ENCODE measurements at regions of chr12 and their contacts with region 1.

Region 1: GRCh38 chr12:108514973-108515814 is at the start of gene FICD:
- DNase-seq: peak; percentile 97 to 100 (median 99)
- ATAC-seq: peak; percentile 95
- H3K4me3 ChIP-seq: peak within 1 kb of the TSS; percentile 90 to 99
- H3K4me3 Mint-ChIP-seq: peak within 1 kb of the TSS; percentile 92
- H3K27ac ChIP-seq: peak within 1 kb of the TSS; percentile 74 to 86
- H3K27ac Mint-ChIP-seq: peak within 1 kb of the TSS; percentile 94
- H3K4me1 ChIP-seq: peaks cover 20% of the 10 kb centered on the region
- H3K4me1 Mint-ChIP-seq: peaks cover 30% of the 10 kb centered on the region
- H3K27me3 ChIP-seq: no peaks in the 10 kb centered on the region
- H3K27me3 Mint-ChIP-seq: no peaks in the 10 kb centered on the region
- CTCF ChIP-seq: no peak
- total RNA-seq, gene FICD: 4.2 to 4.3 TPM

Region 2: GRCh38 chr12:107372229-107372658 is 1143.0 kb before region 1 on chr12:
- CTCF ChIA-PET with region 1: no interaction called
- POLR2A ChIA-PET with region 1: no interaction called
- intact Hi-C with region 1: loop called in 1 of 2 experiments (anchors 10 kb)
- DNase-seq: peak in 8 of 9 experiments; percentile 7 to 84 (median 41)
- ATAC-seq: peak; percentile 66
- H3K4me3 ChIP-seq: peak overlapping the region in 1 of 2 experiments; percentile 7
- H3K4me3 Mint-ChIP-seq: peak overlapping the region; percentile 72
- H3K27ac ChIP-seq: peak overlapping the region; percentile 43 to 62
- H3K27ac Mint-ChIP-seq: peak overlapping the region; percentile 89
- H3K4me1 ChIP-seq: peaks cover 74% of the 10 kb centered on the region
- H3K4me1 Mint-ChIP-seq: peaks cover 83% of the 10 kb centered on the region
- H3K27me3 ChIP-seq: no peaks in the 10 kb centered on the region
- H3K27me3 Mint-ChIP-seq: no peaks in the 10 kb centered on the region
- CTCF ChIP-seq: no peak

Region 3: GRCh38 chr12:107760809-107761501 is 754.2 kb before region 1 on chr12 and contains the start of gene PRDM4:
- CTCF ChIA-PET with region 1: interaction called, 5 read pairs
- POLR2A ChIA-PET with region 1: no interaction called
- intact Hi-C with region 1: loop called in 1 of 2 experiments (anchors 1 kb)
- DNase-seq: peak; percentile 76 to 97 (median 88)
- ATAC-seq: peak; percentile 95
- H3K4me3 ChIP-seq: peak within 1 kb of the TSS; percentile 76 to 82
- H3K4me3 Mint-ChIP-seq: peak within 1 kb of the TSS; percentile 89
- H3K27ac ChIP-seq: peak within 1 kb of the TSS; percentile 80 to 83
- H3K27ac Mint-ChIP-seq: peak within 1 kb of the TSS; percentile 90
- H3K4me1 ChIP-seq: peaks cover 31% of the 10 kb centered on the region
- H3K4me1 Mint-ChIP-seq: peaks cover 44% of the 10 kb centered on the region
- H3K27me3 ChIP-seq: no peaks in the 10 kb centered on the region
- H3K27me3 Mint-ChIP-seq: no peaks in the 10 kb centered on the region
- CTCF ChIP-seq: no peak
- total RNA-seq, gene PRDM4: 44.9 to 46.0 TPM

Region 4: DNA sequence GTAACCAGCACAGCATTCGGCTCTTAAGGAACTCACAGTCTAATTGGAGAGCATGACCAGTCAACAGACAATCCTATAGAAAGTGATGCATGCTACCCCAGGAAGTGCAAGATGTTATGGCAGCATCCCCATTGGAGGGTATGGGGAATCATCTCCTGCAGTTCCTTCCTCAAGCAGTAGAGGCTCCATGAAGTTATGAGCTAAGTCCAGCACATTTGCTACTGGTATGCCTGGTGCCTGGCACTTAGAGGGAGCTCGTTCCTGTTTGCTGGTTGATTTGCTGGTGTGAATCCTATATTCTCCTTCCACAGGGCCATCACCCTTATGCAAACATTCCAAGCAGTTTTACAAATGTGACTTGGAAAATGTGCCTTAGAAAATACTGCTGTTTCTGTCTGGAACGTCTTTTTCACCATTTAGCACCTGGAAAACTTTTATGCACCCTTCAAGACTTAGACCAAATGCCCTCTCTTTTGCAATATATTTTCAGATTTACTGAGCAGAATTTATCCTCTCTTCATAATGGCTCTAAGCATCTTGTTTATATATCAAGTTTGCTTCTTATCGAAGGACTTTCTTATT is 522.2 kb before region 1 on chr12:
- CTCF ChIA-PET with region 1: interaction called, 12 read pairs
- POLR2A ChIA-PET with region 1: no interaction called
- intact Hi-C with region 1: loop called in 1 of 2 experiments (anchors 1 kb)
- DNase-seq: peak in 2 of 9 experiments; percentile 8 to 12
- ATAC-seq: no peak
- H3K4me3 ChIP-seq: no peak overlapping the region
- H3K4me3 Mint-ChIP-seq: no peak overlapping the region
- H3K27ac ChIP-seq: no peak overlapping the region
- H3K27ac Mint-ChIP-seq: no peak overlapping the region
- H3K4me1 ChIP-seq: no peaks in the 10 kb centered on the region
- H3K4me1 Mint-ChIP-seq: no peaks in the 10 kb centered on the region
- H3K27me3 ChIP-seq: no peaks in the 10 kb centered on the region
- H3K27me3 Mint-ChIP-seq: peaks cover 17% of the 10 kb centered on the region
- CTCF ChIP-seq: no peak

Region 5: DNA sequence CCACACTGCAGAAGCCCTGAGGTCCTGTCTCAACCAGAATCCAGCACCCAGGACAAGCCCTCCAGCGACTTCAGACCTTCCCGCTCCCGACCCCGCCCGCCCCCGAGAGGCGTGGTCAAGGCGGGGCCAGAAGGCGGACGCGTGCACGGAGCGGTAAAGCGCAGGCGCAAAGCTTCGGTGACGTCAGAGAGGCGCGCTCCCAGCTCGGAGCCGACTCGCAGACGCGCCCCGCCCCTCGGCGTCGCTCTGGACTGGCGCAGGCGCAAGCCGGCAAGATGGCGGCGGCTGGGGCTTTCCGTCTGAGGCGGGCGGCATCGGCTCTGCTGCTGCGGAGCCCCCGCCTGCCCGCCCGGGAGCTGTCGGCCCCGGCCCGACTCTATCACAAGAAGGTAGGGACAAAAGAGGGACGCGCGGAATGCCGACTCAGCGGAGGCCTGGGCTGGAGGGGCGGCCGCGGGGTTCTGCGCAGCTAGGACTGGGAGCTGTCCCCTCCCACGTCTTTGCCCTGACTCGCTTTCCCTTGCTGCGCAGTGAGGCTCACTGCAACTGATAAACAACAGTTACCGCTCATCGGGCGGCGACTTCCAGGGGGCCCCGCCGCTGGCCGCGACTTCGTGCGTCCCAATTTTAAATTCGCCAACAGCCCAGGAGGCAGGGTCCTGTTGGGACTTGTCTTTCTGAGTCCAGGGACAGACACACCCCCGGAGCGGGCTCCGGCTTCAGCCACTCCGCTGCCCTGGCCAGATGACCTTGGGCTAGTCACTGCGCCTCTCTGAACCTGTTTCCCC is 47.3 kb after region 1 on chr12 and contains the start of gene ISCU:
- CTCF ChIA-PET with region 1: interaction called, 5 read pairs
- POLR2A ChIA-PET with region 1: no interaction called
- intact Hi-C with region 1: loop called (anchors 1 kb)
- DNase-seq: peak; percentile 97 to 100 (median 99)
- ATAC-seq: peak; percentile 70
- H3K4me3 ChIP-seq: peak within 1 kb of the TSS; percentile 90 to 96
- H3K4me3 Mint-ChIP-seq: peak within 1 kb of the TSS; percentile 100
- H3K27ac ChIP-seq: peak within 1 kb of the TSS; percentile 92 to 94
- H3K27ac Mint-ChIP-seq: peak within 1 kb of the TSS; percentile 100
- H3K4me1 ChIP-seq: peaks cover 44% of the 10 kb centered on the region
- H3K4me1 Mint-ChIP-seq: peaks cover 55% of the 10 kb centered on the region
- H3K27me3 ChIP-seq: no peaks in the 10 kb centered on the region
- H3K27me3 Mint-ChIP-seq: no peaks in the 10 kb centered on the region
- CTCF ChIP-seq: no peak
- total RNA-seq, gene ISCU: 254 to 260 TPM

Region 6: DNA sequence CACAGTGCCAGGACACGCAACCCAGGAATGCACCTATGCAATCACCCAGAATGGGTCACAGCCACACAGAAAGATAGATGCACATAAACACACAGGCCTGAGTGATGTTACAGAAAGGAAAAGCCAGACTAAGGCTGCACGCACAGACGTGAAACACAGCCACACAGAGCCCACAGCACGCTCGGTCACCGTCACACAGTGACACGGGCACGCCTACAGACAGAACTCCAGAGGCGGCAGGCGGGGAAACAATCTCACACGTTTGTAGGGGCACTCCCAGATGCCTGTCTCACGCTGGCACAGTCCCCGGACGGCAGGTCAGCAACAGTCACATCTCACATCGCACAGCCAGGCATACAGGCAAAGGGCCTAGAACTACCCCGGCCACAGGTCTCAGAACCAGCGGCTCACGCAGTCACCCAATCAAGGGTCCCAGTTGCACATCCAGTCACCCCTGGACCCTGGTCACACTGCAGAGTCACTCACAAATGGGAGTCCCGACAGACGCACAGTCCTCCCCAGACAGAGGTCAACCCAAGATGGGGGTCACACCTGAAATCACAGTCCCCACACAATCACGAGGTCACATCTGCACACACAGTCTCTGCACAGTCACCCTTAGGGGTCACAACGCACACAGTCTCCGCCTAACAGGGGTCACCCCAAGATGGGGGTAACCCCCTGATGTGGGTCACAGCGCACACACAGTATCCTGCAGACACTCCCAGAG is 341.4 kb after region 1 on chr12:
- CTCF ChIA-PET with region 1: interaction called, 3 read pairs
- POLR2A ChIA-PET with region 1: no interaction called
- intact Hi-C with region 1: loop called (anchors 1 kb)
- DNase-seq: peak; percentile 27 to 92 (median 64)
- ATAC-seq: peak; percentile 70
- H3K4me3 ChIP-seq: peak overlapping the region; percentile 58 to 71
- H3K4me3 Mint-ChIP-seq: peak overlapping the region; percentile 98
- H3K27ac ChIP-seq: peak overlapping the region; percentile 54 to 77
- H3K27ac Mint-ChIP-seq: peak overlapping the region; percentile 97
- H3K4me1 ChIP-seq: peaks cover 27% of the 10 kb centered on the region
- H3K4me1 Mint-ChIP-seq: peaks cover 46% of the 10 kb centered on the region
- H3K27me3 ChIP-seq: peaks cover 0 to 2% of the 10 kb centered on the region in 2 experiments
- H3K27me3 Mint-ChIP-seq: no peaks in the 10 kb centered on the region
- CTCF ChIP-seq: no peak

Region 7: DNA sequence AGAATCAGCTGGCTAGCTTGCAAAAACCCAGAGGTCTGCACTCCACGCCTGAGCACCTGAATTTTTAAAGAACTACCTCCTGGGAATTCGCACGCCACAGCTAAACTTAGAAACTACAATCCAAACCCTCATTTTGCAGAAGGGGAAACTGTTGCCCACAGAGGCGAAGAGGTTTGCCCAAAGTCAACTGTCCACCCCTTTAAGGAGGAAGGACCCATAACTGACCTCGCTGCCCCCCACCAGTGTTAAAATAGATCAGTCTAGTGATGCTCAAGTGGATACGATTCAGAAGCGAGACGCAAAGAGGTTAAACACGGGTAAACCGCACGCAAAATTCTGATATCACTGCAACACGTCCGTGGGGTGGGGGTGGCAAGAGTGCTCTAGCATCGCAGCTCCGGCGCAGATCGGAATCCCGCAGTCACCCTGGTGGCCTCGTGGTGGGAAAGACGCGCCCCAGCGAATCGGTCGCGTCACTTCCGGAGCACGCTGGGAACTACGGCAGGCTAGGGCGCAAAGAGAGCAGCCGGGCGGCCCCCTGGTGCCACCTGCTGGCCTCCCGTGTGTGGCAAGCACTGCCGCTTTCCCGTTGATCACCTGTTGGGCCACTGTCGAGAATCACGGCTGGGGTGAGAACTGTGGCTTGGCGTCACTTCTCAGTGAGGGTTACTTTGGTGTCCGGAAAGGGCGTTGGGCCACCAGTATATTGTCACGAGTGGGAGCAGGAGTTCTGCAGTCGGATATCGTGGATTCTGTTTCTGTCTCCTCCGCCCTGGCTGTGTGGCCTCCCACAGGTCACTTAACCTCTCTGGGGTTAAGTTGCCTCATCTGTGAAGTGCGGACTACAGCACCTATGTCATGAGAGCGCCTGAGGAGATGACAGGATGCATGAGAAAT is 578.1 kb after region 1 on chr12 and contains the start of gene ALKBH2:
- CTCF ChIA-PET with region 1: no interaction called
- POLR2A ChIA-PET with region 1: no interaction called
- intact Hi-C with region 1: loop called in 1 of 2 experiments (anchors 2 kb)
- DNase-seq: peak; percentile 89 to 99 (median 95)
- ATAC-seq: peak; percentile 77
- H3K4me3 ChIP-seq: peak within 1 kb of the TSS; percentile 63 to 78
- H3K4me3 Mint-ChIP-seq: peak within 1 kb of the TSS; percentile 83
- H3K27ac ChIP-seq: peak within 1 kb of the TSS; percentile 65 to 69
- H3K27ac Mint-ChIP-seq: peak within 1 kb of the TSS; percentile 91
- H3K4me1 ChIP-seq: peaks cover 27% of the 10 kb centered on the region
- H3K4me1 Mint-ChIP-seq: peaks cover 40% of the 10 kb centered on the region
- H3K27me3 ChIP-seq: no peaks in the 10 kb centered on the region
- H3K27me3 Mint-ChIP-seq: no peaks in the 10 kb centered on the region
- CTCF ChIP-seq: peak; percentile 94
- total RNA-seq, gene ALKBH2: 9.8 to 12.8 TPM

Measured in CD8-positive, alpha-beta T cell (primary cell).